SK-N-SH (cell line): ENCODE measurements at regions of chr1 and their contacts with region 1.

Region 1: GRCh38 chr1:41516168-41517061 is 31.9 kb upstream of the EDN2 start:
- DNase-seq: peak; percentile 97
- H3K4me3 ChIP-seq: peak overlapping the region; percentile 21 to 44; a peak in 2 of 4 replicates
- H3K27ac ChIP-seq: no peak overlapping the region; a peak in 1 of 4 replicates
- H3K4me1 ChIP-seq: peaks cover 4 to 48% of the 10 kb centered on the region in 2 experiments; a peak in 3 of 4 replicates
- H3K27me3 ChIP-seq: no peaks in the 10 kb centered on the region
- CTCF ChIP-seq: peak; percentile 73
- EP300 ChIP-seq: peak in 1 of 2 experiments; percentile 9; a peak in 1 of 4 replicates
- RAD21 ChIP-seq: peak; percentile 76

Region 2: GRCh38 chr1:41464885-41465284 is 51.5 kb before region 1 on chr1:
- CTCF ChIA-PET with region 1: interaction called, 15 read pairs
- POLR2A ChIA-PET with region 1: no interaction called
- DNase-seq: no peak
- H3K4me3 ChIP-seq: no peak overlapping the region
- H3K27ac ChIP-seq: peak overlapping the region in 1 of 2 experiments; percentile 39; a peak in 1 of 4 replicates
- H3K4me1 ChIP-seq: peaks cover 0 to 22% of the 10 kb centered on the region in 2 experiments; a peak in 1 of 4 replicates
- H3K27me3 ChIP-seq: no peaks in the 10 kb centered on the region
- CTCF ChIP-seq: no peak
- EP300 ChIP-seq: peak in 1 of 2 experiments; percentile 40; a peak in 1 of 4 replicates
- RAD21 ChIP-seq: no peak

Region 3: DNA sequence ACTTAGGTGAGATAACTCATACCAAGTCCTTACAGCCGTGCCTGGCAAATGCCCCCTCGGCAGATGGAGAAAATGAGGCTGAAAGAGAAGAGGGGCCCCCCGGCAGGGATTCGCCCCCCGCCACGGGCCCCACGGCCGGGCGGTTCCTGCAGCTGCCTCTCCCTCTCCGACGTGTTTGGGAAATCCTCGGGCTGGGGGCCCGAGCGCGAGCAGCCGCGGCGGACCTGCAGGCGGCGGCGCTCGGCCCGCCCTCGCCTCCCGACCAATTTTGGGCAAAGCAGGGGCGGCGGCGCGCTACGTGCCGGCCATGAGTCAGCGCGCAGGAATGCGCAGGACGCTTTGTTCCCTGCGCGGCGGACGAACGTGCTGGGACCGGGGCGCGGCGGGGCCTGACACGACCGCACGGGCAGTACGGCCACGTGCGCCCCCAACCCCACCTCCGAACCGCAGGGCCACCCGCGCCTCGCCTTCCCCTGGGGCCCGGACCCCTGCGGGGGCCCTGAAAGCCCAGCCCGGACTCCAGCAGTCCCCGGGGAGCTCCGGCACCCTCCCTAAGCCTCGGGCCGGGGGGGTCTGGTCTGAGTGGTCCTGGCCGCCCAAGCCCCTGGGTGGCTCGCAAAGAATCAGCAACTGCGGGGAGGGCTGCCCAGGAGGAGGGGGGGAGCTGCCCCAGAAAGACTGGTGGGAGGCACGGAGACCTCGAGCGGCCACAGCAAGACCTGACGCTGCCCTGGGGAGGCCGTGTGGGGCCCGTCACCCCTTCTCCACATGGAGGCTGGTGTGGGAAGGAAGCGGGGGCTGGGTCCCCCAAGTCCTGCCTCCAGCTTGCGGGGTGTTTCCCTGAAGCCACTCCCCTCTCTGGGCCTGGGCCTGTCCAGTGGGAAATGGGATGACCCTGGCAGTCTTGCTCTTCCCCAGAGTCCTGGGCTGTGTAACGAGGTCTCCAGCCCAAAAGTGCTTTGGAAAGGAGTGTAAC is 20.0 kb before region 1 on chr1:
- CTCF ChIA-PET with region 1: interaction called, 28 read pairs
- POLR2A ChIA-PET with region 1: no interaction called
- DNase-seq: no peak
- H3K4me3 ChIP-seq: no peak overlapping the region
- H3K27ac ChIP-seq: no peak overlapping the region
- H3K4me1 ChIP-seq: peaks cover 25 to 43% of the 10 kb centered on the region in 2 experiments; a peak in 3 of 4 replicates
- H3K27me3 ChIP-seq: no peaks in the 10 kb centered on the region
- CTCF ChIP-seq: no peak
- EP300 ChIP-seq: no peak
- RAD21 ChIP-seq: no peak

Region 4: GRCh38 chr1:41537788-41538351 is 21.5 kb after region 1 on chr1:
- CTCF ChIA-PET with region 1: interaction called, 22 read pairs
- POLR2A ChIA-PET with region 1: no interaction called
- DNase-seq: no peak
- H3K4me3 ChIP-seq: no peak overlapping the region
- H3K27ac ChIP-seq: peak overlapping the region in 1 of 2 experiments; percentile 25; a peak in 1 of 4 replicates
- H3K4me1 ChIP-seq: peaks cover 5 to 23% of the 10 kb centered on the region in 2 experiments; a peak in 2 of 4 replicates
- H3K27me3 ChIP-seq: no peaks in the 10 kb centered on the region
- CTCF ChIP-seq: no peak
- EP300 ChIP-seq: no peak
- RAD21 ChIP-seq: no peak

Region 5: GRCh38 chr1:41827991-41828570 is 311.7 kb after region 1 on chr1:
- CTCF ChIA-PET with region 1: no interaction called
- POLR2A ChIA-PET with region 1: no interaction called
- DNase-seq: no peak
- H3K4me3 ChIP-seq: no peak overlapping the region
- H3K27ac ChIP-seq: no peak overlapping the region
- H3K4me1 ChIP-seq: no peaks in the 10 kb centered on the region; a peak in 1 of 4 replicates
- H3K27me3 ChIP-seq: no peaks in the 10 kb centered on the region
- CTCF ChIP-seq: no peak
- EP300 ChIP-seq: no peak
- RAD21 ChIP-seq: no peak